ENCODE measurements at regions of chr16 and their contacts with region 1.

Region 1: GRCh38 chr16:58280836-58281301 is 14.0 kb downstream of the PRSS54 start:
- DNase-seq: no peak

Region 2: GRCh38 chr16:56382901-56383355 is 1897.9 kb before region 1 on chr16:
- intact Hi-C with region 1: loop called in 1 of 2 experiments (anchors 5 kb)
- DNase-seq: no peak

Region 3: DNA sequence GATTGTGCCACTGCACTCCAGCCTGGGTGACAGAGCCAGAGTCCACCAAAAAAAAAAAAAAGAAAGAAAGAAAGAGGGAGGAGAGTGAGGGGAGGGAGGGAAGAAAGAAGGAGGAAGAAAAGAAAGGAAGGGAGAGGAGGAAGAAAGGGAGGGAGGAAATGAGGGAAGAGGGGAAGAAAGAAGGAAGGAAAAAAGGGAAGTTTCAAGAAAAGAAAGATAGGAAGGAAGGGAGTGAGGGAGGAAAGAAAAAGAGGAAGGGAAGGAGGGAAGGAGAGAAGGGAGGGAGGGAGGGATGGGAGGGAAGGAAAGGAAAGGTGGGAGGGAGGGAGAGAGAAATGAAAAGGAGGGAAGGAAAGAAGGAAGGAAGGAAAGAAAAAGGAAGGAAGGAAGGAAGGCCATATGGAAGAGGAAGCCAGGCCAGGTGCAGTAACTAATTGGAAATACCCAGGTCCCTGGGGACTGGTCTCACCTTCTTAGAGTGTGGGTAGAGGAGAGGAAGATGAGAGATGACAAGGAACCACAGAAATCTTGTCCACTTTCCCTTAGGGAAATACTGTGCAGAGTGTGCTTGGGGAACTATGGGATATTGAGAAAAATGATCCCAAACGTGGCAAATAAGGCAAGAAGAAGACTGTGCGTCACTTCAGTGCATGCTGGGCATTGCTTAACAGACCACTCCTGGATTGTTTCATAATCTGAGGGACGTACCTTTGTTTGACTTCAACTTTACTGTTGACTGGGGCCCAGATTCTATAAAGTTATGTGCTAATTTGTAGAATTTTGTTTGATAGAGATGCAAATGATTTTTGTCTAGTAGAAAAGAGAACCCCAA is 67.8 kb before region 1 on chr16:
- intact Hi-C with region 1: loop called in 1 of 2 experiments (anchors 10 kb)
- DNase-seq: no peak

Measured in posterior vena cava (tissue), 2 donors.